Activated B cell treated with CpG ODN at 0.5 μM for 24 hours (primary cell): ENCODE measurements at regions of chr11 and their contacts with region 1.

Region 1: DNA sequence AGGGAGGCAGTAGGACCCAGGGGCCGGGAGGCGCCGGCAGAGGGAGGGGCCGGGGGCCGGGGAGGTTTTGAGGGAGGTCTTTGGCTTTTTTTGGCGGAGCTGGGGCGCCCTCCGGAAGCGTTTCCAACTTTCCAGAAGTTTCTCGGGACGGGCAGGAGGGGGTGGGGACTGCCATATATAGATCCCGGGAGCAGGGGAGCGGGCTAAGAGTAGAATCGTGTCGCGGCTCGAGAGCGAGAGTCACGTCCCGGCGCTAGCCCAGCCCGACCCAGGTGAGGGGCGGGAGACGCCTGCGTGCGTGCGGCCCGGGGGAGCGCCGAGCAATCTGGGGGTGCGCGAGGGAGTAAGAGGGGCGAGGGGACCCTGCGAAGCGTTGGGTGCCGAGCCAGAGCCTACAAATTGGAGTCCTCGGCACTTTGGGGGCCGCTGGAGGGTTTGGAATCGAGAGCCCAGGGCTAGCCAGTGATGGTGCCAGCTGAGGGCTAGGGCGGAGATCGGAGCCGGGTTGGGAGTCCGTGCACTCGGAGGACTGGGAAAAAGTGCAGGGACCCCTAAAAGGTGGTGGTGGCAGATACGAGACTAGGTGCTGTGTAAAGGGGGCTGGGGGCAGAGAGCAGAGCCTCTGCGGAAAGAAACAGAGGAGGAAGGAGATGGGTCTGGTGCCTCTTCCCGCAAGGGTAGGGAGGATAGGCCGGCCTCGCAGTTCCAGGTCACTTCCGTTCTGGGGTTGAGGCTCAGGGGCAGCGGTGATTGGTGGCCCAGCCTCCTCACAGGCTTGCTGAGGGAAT is at the start of gene SERPINH1:
- DNase-seq: peak; percentile 47
- ATAC-seq: peak; percentile 75
- H3K4me3 Mint-ChIP-seq: peak within 1 kb of the TSS; percentile 93
- H3K27ac Mint-ChIP-seq: peak within 1 kb of the TSS; percentile 76
- H3K4me1 Mint-ChIP-seq: peaks cover 20% of the 10 kb centered on the region
- H3K27me3 Mint-ChIP-seq: peaks cover 2% of the 10 kb centered on the region
- CTCF ChIP-seq: no peak
- total RNA-seq, gene SERPINH1: 4.5 and 5.6 TPM in 2 replicates

Region 2: DNA sequence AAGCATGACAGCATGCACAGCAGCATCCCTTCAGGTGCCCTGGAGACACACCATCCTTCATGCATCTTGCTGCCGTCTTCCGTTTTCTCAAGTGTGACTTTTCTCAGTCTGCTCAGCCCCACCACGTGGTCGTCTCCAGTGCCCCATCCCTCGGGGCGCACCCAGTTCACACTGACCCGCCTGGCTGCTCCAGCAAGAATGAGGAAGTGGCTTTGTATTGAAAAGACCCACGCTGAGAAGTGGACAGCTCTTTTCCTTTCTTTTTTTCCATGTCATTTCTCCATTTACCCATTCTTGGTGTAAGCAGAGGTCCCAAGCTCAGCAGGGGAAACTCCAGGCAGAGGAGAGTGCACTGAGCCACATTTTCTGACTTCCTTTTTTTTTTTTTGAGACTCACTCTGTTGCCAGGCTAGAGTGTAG is 14.3 kb after region 1 on chr11:
- CTCF ChIA-PET with region 1: interaction called, 4 read pairs
- POLR2A ChIA-PET with region 1: interaction called, 5 read pairs
- intact Hi-C with region 1: loop called (anchors 1 kb)
- DNase-seq: peak; percentile 60
- ATAC-seq: peak; percentile 94
- H3K4me3 Mint-ChIP-seq: peak overlapping the region; percentile 3
- H3K27ac Mint-ChIP-seq: peak overlapping the region; percentile 60
- H3K4me1 Mint-ChIP-seq: peaks cover 21% of the 10 kb centered on the region
- H3K27me3 Mint-ChIP-seq: no peaks in the 10 kb centered on the region
- CTCF ChIP-seq: no peak

Region 3: DNA sequence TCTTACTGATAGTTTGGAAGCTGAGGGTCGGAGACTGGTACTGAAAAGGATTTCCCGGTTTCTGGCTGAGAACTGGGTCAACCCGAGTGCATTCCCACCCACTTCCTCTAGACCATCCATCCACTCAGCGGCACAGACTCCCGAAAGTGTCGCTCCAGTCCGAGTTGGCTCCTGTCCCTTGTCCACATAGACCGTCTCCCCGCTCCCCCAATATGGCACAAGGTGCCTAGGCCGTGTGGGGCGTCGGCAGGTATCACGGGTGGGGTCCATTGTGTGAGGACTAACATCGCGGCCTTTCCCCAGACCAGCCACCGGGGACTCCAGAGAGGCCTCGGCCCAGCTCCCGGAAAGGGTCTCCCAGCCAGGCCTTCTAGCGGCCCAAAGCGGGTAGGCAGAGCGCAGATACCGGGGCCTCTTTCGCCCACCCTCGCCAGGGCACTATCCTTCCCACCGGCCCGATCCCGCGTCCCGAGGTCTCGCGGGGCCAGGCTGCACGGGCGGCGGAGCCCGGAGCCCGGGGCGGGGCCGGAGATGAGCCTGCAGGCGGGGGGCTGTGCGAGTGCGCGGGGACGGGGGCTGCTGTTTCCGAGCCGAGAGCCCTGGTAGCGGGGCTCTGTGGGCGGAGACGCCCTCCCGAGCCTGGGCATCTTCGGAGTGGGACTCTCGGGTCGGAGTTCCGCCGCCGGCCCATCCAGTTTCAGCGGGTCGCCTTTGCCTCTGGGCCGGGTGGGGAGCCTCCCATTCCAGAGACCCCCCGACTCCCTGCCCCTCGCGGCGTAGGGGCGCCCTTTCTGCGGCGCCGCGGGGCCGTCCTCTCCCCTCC is 20.9 kb after region 1 on chr11:
- CTCF ChIA-PET with region 1: no interaction called
- POLR2A ChIA-PET with region 1: interaction called, 16 read pairs
- intact Hi-C with region 1: no loop called
- DNase-seq: peak; percentile 63
- ATAC-seq: peak; percentile 90
- H3K4me3 Mint-ChIP-seq: peak overlapping the region; percentile 86
- H3K27ac Mint-ChIP-seq: peak overlapping the region; percentile 75
- H3K4me1 Mint-ChIP-seq: peaks cover 23% of the 10 kb centered on the region
- H3K27me3 Mint-ChIP-seq: no peaks in the 10 kb centered on the region
- CTCF ChIP-seq: no peak

Region 4: DNA sequence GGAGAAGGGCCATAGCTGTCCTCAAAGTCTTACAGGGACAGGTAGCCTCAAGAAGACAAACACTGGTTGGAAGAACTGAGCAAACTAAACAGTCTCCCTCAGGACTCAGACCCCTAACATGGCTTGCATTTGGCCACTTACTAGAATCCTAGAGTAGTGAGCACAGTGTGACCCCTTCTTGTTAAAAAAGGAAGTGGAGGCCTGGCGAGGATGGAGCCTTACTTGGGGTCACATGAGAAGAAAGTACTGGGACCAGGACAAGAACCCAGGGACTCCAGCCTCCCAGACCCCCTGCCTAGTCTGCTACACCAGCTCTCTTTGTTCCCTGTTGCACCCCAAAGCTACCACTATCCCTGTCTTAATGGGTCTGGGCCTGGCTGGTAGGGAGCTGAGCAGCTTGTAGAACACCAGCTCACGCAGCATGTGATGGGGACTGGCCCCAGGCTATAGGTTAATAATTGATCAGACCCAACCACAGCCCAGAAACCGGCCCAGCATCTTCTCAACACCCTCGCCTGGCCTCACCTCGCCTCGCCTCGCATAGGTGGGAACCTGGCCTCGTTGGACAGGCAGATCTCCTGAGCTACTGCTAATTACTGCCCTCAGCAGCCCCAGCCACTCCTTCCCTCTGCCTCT is 224.0 kb after region 1 on chr11:
- CTCF ChIA-PET with region 1: no interaction called
- POLR2A ChIA-PET with region 1: no interaction called
- intact Hi-C with region 1: no loop called
- DNase-seq: no peak
- ATAC-seq: no peak
- H3K4me3 Mint-ChIP-seq: no peak overlapping the region
- H3K27ac Mint-ChIP-seq: no peak overlapping the region
- H3K4me1 Mint-ChIP-seq: no peaks in the 10 kb centered on the region
- H3K27me3 Mint-ChIP-seq: no peaks in the 10 kb centered on the region
- CTCF ChIP-seq: no peak

Region 5: DNA sequence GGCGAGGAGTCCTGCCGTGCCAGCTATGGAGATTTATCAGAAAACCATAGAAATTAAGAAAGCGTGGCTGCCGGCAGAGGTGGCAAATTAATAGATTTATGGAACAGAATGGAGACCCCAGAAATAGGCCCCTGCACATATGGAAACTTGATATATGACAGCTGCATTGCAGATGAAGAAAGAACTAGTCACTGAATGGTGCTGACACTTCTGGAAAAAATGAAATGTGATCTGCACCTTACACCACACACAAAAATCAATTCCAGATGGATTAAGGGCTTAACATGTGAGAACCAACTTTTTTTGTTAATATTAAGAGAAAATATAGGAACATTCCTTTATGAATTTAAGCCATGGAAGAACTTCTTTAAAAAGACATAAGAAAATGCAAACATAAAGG is 1180.7 kb after region 1 on chr11:
- CTCF ChIA-PET with region 1: no interaction called
- POLR2A ChIA-PET with region 1: no interaction called
- intact Hi-C with region 1: no loop called
- DNase-seq: no peak
- ATAC-seq: no peak
- H3K4me3 Mint-ChIP-seq: no peak overlapping the region
- H3K27ac Mint-ChIP-seq: no peak overlapping the region
- H3K4me1 Mint-ChIP-seq: no peaks in the 10 kb centered on the region
- H3K27me3 Mint-ChIP-seq: peaks cover 15% of the 10 kb centered on the region
- CTCF ChIP-seq: no peak